ENCODE measurements at regions of chr6 and their contacts with region 1.

Region 1: DNA sequence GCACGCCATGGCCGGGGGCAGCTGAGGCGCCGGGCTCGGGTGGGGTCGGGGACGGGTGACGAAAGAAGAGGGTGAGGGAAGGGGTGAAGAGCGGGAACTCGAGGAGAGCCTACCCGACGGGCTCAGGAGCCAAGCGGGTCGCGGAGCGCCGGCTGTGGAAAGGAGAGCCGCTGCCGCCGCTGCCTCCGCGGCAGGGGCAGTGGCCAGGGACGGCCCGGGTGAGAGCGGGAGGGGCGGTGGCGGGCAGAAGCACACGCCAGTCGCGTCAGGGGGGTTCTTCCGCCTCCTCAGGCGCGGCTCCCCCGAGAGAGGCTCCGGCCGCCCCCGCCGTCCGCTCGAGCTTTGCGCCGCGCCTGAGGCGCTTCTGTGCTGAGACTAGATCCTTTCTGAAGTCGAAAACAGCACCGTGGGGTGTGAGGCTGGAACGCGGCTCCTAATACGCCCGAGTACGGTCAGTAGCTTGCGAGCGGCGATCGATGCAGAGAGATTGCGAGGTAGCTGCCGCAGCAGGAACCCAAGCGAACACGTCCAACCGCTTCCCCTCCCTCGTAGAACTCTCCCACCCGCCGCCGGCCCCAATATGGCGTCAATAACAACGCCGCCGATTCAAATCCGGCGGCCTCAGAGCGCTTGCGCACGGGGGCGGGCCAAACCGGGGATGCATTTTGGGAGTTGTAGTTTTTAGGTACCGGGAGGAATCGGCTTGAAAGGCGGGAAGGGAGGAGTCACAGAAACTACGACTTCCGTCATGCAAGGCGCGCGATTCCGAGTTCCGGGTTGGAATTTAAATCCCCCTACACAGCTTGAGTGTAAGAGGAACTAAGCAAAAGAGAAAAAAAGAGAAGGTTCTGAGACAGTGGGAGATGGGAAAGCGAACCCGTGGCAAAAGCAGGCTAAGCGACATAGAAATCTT is at the start of gene AKIRIN2:
- DNase-seq: peak; percentile 99
- H3K4me3 ChIP-seq: peak within 1 kb of the TSS; percentile 75 to 100 (median 85)
- H3K4me3 Mint-ChIP-seq: peak within 1 kb of the TSS; percentile 99
- H3K27ac ChIP-seq: peak within 1 kb of the TSS; percentile 93 to 99
- H3K27ac Mint-ChIP-seq: peak within 1 kb of the TSS; percentile 94 to 100 (median 99)
- H3K4me1 ChIP-seq: peaks cover 25 to 33% of the 10 kb centered on the region in 2 donors
- H3K4me1 Mint-ChIP-seq: peaks cover 24% of the 10 kb centered on the region
- H3K27me3 ChIP-seq: no peaks in the 10 kb centered on the region
- H3K27me3 Mint-ChIP-seq: no peaks in the 10 kb centered on the region
- CTCF ChIP-seq: no peak
- polyA plus RNA-seq, gene AKIRIN2: 102 to 145 (median 118) TPM

Region 2: DNA sequence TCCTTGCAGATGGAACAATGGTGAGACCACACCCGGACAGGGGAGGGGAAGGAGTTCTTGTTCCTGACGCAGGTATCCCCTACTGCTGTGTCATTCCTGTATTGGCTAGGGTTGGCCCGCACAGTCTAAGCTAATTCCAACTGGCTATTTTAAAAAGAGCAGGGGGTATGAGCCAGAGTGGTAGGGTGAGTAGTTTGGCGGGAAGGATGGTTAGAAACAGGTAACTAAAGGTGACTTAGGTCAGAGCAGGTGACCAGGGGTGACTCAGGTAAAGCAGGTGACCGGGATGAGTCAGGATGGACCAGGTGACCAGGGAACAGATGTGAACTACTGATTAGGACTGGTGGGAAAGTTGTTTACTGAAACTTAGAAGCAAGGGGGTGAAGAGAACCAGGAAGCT is 488.6 kb before region 1 on chr6:
- intact Hi-C with region 1: no loop called
- DNase-seq: no peak
- H3K4me3 ChIP-seq: no peak overlapping the region
- H3K4me3 Mint-ChIP-seq: no peak overlapping the region
- H3K27ac ChIP-seq: no peak overlapping the region
- H3K27ac Mint-ChIP-seq: peak overlapping the region in 2 of 7 donors; percentile 68 to 78
- H3K4me1 ChIP-seq: no peaks in the 10 kb centered on the region
- H3K4me1 Mint-ChIP-seq: peaks cover 3% of the 10 kb centered on the region
- H3K27me3 ChIP-seq: no peaks in the 10 kb centered on the region
- H3K27me3 Mint-ChIP-seq: no peaks in the 10 kb centered on the region
- CTCF ChIP-seq: no peak

Region 3: GRCh38 chr6:87522686-87523085 is 179.2 kb before region 1 on chr6:
- intact Hi-C with region 1: no loop called
- DNase-seq: no peak
- H3K4me3 ChIP-seq: no peak overlapping the region
- H3K4me3 Mint-ChIP-seq: no peak overlapping the region
- H3K27ac ChIP-seq: no peak overlapping the region
- H3K27ac Mint-ChIP-seq: no peak overlapping the region
- H3K4me1 ChIP-seq: no peaks in the 10 kb centered on the region
- H3K4me1 Mint-ChIP-seq: no peaks in the 10 kb centered on the region
- H3K27me3 ChIP-seq: no peaks in the 10 kb centered on the region
- H3K27me3 Mint-ChIP-seq: peaks cover 0 to 1% (median 0%) of the 10 kb centered on the region in 3 donors
- CTCF ChIP-seq: no peak

Region 4: GRCh38 chr6:87589693-87590549 is 112.0 kb before region 1 on chr6 and contains the starts of genes ORC3 and RARS2:
- intact Hi-C with region 1: loop called in 1 of 2 experiments (anchors 10 kb)
- DNase-seq: peak; percentile 90 to 94 (median 93)
- H3K4me3 ChIP-seq: peak within 1 kb of the TSS; percentile 90 to 98 (median 93)
- H3K4me3 Mint-ChIP-seq: peak within 1 kb of the TSS; percentile 91 to 98
- H3K27ac ChIP-seq: peak within 1 kb of the TSS; percentile 66 to 98
- H3K27ac Mint-ChIP-seq: peak within 1 kb of the TSS; percentile 89 to 96 (median 93)
- H3K4me1 ChIP-seq: peaks cover 23 to 34% of the 10 kb centered on the region in 2 donors
- H3K4me1 Mint-ChIP-seq: peaks cover 38% of the 10 kb centered on the region
- H3K27me3 ChIP-seq: no peaks in the 10 kb centered on the region
- H3K27me3 Mint-ChIP-seq: no peaks in the 10 kb centered on the region
- CTCF ChIP-seq: no peak
- polyA plus RNA-seq, gene ORC3: 9.1 to 20.7 (median 16.2) TPM
- polyA plus RNA-seq, gene RARS2: 8.6 to 33.0 (median 27.3) TPM

Region 5: DNA sequence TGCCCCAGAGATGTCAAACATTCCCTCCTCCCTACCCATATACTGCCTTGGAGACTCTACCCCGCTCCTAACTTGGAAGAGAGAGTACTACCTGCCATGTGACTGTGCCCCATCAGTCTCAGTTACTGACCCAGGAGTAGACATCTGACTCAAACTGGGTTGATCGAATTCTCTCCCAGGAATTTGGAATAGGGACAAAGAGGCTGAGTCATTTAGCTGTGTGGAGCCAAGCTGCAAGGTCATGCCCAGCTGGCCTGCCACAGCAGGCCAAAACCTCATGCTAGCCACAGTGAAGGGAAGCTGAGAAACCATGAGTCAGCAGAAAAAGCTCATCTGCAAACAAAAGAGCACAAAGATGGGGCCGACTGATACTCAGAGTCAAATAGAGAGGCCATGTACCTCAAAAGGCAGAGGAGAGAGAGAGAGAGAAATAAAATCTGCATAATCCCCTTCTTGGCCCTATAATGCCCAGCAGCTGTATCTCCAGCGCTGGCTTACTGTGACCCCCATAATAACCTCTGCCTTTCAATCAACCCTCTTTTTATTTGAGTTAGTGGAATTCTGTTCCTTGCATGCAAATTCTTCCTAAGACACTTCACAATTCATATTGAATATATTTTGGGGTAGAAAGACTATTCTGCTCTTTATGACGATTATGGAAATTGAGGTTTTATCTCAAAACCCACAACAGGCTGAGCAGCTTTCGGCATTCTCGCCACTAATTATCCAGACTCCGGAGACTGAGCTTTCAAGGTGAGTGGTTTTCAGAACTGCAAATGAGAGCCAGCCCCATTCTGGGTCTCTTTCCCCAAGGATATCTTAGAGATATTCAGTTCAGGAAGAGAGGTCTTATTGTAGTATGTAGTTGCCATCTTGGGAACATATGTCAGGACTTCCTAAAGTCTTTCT is 21.5 kb after region 1 on chr6:
- intact Hi-C with region 1: loop called in 1 of 2 experiments (anchors 2 kb)
- DNase-seq: peak; percentile 78 to 88 (median 88)
- H3K4me3 ChIP-seq: no peak overlapping the region
- H3K4me3 Mint-ChIP-seq: peak overlapping the region in 1 of 2 donors; percentile 26
- H3K27ac ChIP-seq: peak overlapping the region in 1 of 2 donors; percentile 59
- H3K27ac Mint-ChIP-seq: peak overlapping the region; percentile 60 to 95 (median 87)
- H3K4me1 ChIP-seq: peaks cover 51 to 59% of the 10 kb centered on the region in 2 donors
- H3K4me1 Mint-ChIP-seq: peaks cover 45% of the 10 kb centered on the region
- H3K27me3 ChIP-seq: no peaks in the 10 kb centered on the region
- H3K27me3 Mint-ChIP-seq: peaks cover 0 to 7% (median 0%) of the 10 kb centered on the region in 3 donors
- CTCF ChIP-seq: no peak

Region 6: GRCh38 chr6:87731818-87732661 is 30.1 kb after region 1 on chr6:
- intact Hi-C with region 1: loop called (anchors 2 kb)
- DNase-seq: peak; percentile 96 to 99 (median 98)
- H3K4me3 ChIP-seq: peak overlapping the region in 2 of 3 experiments; percentile 37 to 71
- H3K4me3 Mint-ChIP-seq: peak overlapping the region; percentile 55 to 85
- H3K27ac ChIP-seq: peak overlapping the region; percentile 98
- H3K27ac Mint-ChIP-seq: peak overlapping the region; percentile 97 to 100 (median 99)
- H3K4me1 ChIP-seq: peaks cover 47 to 57% of the 10 kb centered on the region in 2 donors
- H3K4me1 Mint-ChIP-seq: peaks cover 46% of the 10 kb centered on the region
- H3K27me3 ChIP-seq: no peaks in the 10 kb centered on the region
- H3K27me3 Mint-ChIP-seq: peaks cover 0 to 2% (median 0%) of the 10 kb centered on the region in 3 donors
- CTCF ChIP-seq: no peak

Region 7: GRCh38 chr6:87756858-87757257 is 54.9 kb after region 1 on chr6:
- intact Hi-C with region 1: loop called (anchors 5 kb)
- DNase-seq: peak; percentile 97 to 99 (median 98)
- H3K4me3 ChIP-seq: peak overlapping the region in 1 of 3 experiments; percentile 47
- H3K4me3 Mint-ChIP-seq: no peak overlapping the region
- H3K27ac ChIP-seq: peak overlapping the region; percentile 86 to 90
- H3K27ac Mint-ChIP-seq: peak overlapping the region; percentile 94 to 99 (median 97)
- H3K4me1 ChIP-seq: peaks cover 57 to 64% of the 10 kb centered on the region in 2 donors
- H3K4me1 Mint-ChIP-seq: peaks cover 53% of the 10 kb centered on the region
- H3K27me3 ChIP-seq: no peaks in the 10 kb centered on the region
- H3K27me3 Mint-ChIP-seq: peaks cover 0 to 1% (median 0%) of the 10 kb centered on the region in 3 donors
- CTCF ChIP-seq: no peak

Region 8: GRCh38 chr6:87825821-87826221 is 123.9 kb after region 1 on chr6:
- intact Hi-C with region 1: loop called in 1 of 2 experiments (anchors 5 kb)
- DNase-seq: peak; percentile 59 to 86 (median 80)
- H3K4me3 ChIP-seq: no peak overlapping the region
- H3K4me3 Mint-ChIP-seq: peak overlapping the region in 1 of 2 donors; percentile 57
- H3K27ac ChIP-seq: peak overlapping the region in 1 of 2 donors; percentile 81
- H3K27ac Mint-ChIP-seq: peak overlapping the region; percentile 87 to 94 (median 90)
- H3K4me1 ChIP-seq: peaks cover 35 to 43% of the 10 kb centered on the region in 2 donors
- H3K4me1 Mint-ChIP-seq: peaks cover 41% of the 10 kb centered on the region
- H3K27me3 ChIP-seq: no peaks in the 10 kb centered on the region
- H3K27me3 Mint-ChIP-seq: no peaks in the 10 kb centered on the region
- CTCF ChIP-seq: no peak

Region 9: DNA sequence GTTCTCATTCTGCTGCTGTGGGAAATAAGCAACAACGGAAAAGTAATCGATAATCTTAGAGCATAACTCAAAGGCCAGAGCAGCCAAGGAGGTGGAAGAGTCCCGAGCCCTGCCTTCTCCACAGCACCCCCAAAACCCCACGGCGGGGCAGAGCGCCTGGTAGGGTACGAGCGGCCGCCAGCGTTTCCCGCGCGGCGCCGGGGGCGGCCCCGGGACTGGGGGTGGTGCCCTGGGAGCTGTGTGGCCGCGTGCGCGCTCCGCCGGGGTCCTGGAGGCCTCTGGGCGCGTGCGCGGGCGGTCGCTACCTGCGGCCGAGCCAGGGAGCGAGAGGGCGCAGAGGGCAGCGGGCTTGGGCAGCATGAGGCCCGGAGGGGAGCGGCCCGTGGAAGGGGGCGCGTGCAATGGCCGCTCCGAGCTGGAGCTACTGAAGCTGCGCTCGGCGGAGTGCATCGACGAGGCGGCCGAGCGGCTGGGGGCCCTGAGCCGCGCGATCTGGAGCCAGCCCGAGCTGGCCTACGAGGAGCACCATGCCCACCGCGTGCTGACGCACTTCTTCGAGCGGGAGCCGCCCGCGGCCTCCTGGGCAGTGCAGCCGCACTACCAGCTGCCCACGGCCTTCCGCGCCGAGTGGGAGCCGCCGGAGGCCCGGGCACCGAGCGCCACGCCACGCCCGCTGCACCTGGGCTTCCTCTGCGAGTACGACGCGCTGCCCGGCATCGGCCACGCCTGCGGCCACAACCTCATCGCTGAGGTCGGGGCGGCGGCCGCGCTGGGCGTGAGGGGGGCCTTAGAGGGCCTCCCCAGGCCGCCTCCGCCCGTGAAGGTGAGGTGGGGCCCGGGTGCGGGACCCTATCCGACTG is 1444.1 kb after region 1 on chr6 and contains the start of gene PM20D2:
- intact Hi-C with region 1: no loop called
- DNase-seq: peak in 2 of 3 donors; percentile 21 to 35
- H3K4me3 ChIP-seq: peak within 1 kb of the TSS; percentile 33 to 77 (median 72)
- H3K4me3 Mint-ChIP-seq: peak within 1 kb of the TSS; percentile 83 to 90
- H3K27ac ChIP-seq: peak within 1 kb of the TSS in 1 of 2 donors; percentile 3
- H3K27ac Mint-ChIP-seq: peak within 1 kb of the TSS in 5 of 7 donors; percentile 45 to 73 (median 61)
- H3K4me1 ChIP-seq: peaks cover 8 to 21% of the 10 kb centered on the region in 2 donors
- H3K4me1 Mint-ChIP-seq: peaks cover 13% of the 10 kb centered on the region
- H3K27me3 ChIP-seq: no peaks in the 10 kb centered on the region
- H3K27me3 Mint-ChIP-seq: no peaks in the 10 kb centered on the region
- CTCF ChIP-seq: no peak
- polyA plus RNA-seq, gene PM20D2: 1.2 to 2.1 (median 1.4) TPM

Measured in CD14-positive monocyte (primary cell).